ENCODE measurements at regions of chr1 and their contacts with region 1.

Region 1: DNA sequence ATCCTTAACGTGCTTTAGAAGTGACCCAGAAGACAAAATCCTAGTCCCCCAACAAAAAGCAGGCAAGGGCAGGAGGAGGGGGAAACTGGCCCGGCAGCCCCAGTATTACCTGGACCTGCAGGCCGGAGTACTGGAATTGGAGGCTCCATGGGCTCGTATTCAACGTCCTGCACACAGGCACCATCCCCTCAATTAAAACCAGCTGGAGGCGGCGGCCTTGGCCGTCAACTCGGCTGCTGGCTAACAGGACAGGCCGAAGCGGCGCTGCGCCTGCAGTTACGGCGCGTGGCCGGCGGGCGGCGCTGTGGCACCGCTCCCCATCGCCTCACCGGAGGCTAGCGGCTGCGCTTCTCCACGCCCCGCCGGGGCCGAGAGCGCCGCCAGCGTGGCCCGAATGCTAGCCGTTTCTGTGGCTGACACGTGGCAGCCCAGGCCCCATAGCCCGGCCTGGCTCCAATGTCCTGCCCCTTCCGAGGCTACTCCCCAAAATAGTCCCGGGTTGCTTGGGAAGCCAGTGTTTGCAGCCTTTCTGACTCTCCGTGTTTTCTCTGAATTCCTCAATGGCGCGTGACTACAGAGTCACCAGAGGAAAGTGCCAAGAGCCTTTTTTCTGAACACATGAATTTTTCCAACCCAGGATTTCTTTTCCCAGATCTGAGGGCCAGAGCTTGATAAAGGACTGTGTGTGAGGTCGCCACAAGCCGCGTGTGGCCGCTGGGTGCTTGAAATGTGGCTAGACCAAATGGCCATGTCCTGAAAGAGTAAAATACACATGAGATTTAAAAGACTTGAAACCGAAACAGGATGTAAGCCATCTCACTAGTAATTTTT is 82.5 kb downstream of the HHIPL2 start:
- DNase-seq: peak; percentile 89 to 91
- ATAC-seq: peak; percentile 98 to 100 (median 99)
- H3K4me3 ChIP-seq: peak overlapping the region in 9 of 10 donors; percentile 24 to 60 (median 49)
- H3K27ac ChIP-seq: peak overlapping the region; percentile 37 to 86 (median 76)
- H3K4me1 ChIP-seq: peaks cover 0 to 15% (median 7%) of the 10 kb centered on the region in 9 donors
- H3K27me3 ChIP-seq: no peaks in the 10 kb centered on the region
- CTCF ChIP-seq: peak; percentile 96 to 100 (median 100)

Region 2: DNA sequence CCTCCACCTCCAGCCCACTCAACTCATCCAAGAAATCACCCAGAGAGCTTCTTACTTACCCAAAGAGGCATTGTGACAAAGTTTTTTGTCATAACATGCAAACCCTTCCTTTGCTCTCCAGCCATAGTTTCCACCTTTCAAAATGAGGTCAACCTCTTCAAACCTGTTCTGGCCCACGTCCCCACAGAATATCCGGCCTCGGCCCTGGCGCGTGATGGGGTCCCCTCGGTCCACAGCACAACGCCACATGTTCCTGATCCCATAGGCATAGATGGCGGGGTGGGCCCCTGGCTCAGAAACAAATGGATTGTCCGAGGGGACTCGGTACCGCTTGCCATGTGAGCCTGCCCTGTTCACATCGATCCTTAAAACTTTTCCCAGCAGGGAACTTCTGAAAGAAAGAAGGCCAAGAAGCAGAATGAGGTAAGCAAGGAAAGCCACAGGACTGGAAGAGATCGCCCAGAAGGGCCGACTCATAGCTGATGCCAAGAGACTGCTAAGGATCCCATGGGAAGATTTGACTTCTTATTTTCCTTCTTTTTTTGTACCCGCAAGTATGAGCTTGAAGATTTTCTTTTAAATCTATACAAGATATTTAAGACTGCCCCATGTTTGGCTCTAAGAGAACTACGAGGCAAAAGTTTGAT is 74.6 kb after region 1 on chr1:
- intact Hi-C with region 1: no loop called
- DNase-seq: no peak
- ATAC-seq: no peak
- H3K4me3 ChIP-seq: no peak overlapping the region
- H3K27ac ChIP-seq: no peak overlapping the region
- H3K4me1 ChIP-seq: no peaks in the 10 kb centered on the region
- H3K27me3 ChIP-seq: peaks cover 0 to 24% (median 18%) of the 10 kb centered on the region in 7 donors
- CTCF ChIP-seq: no peak

Region 3: DNA sequence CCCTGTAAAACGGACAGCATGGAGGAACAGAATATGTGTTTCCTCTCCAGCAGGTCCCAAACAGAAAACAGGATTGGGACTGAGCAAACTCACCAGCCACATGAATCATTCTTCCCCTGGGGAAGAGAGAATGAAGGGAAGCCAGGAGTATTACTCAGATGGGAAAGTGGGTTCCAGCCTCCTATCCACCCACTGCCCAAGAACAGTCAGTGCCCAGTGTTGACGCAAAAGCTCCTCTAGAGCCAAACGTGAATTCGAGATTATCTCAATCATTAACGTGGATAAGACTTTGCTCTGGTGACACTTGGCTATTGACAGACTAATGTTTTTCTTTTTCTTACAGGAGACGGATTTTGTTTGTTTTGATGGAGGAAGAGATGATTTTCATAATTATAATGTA is 161.8 kb after region 1 on chr1:
- intact Hi-C with region 1: loop called in 2 of 10 experiments (anchors 5 kb)
- DNase-seq: peak in 1 of 2 donors; percentile 7
- ATAC-seq: peak in 5 of 8 donors; percentile 35 to 92 (median 47)
- H3K4me3 ChIP-seq: no peak overlapping the region
- H3K27ac ChIP-seq: no peak overlapping the region
- H3K4me1 ChIP-seq: peaks cover 0 to 7% (median 0%) of the 10 kb centered on the region in 9 donors
- H3K27me3 ChIP-seq: no peaks in the 10 kb centered on the region
- CTCF ChIP-seq: no peak

Region 4: GRCh38 chr1:222634180-222635013 is 169.0 kb after region 1 on chr1:
- intact Hi-C with region 1: loop called (anchors 1 to 5 kb)
- DNase-seq: peak in 1 of 2 donors; percentile 85
- ATAC-seq: peak in 7 of 8 donors; percentile 55 to 84 (median 77)
- H3K4me3 ChIP-seq: no peak overlapping the region
- H3K27ac ChIP-seq: peak overlapping the region in 1 of 10 donors; percentile 16
- H3K4me1 ChIP-seq: no peaks in the 10 kb centered on the region
- H3K27me3 ChIP-seq: no peaks in the 10 kb centered on the region
- CTCF ChIP-seq: peak; percentile 85 to 95 (median 90)

Region 5: GRCh38 chr1:222713091-222713961 is 247.9 kb after region 1 on chr1:
- intact Hi-C with region 1: loop called in 1 of 10 experiments (anchors 10 kb)
- DNase-seq: peak; percentile 92 to 94
- ATAC-seq: peak; percentile 85 to 92 (median 90)
- H3K4me3 ChIP-seq: peak overlapping the region; percentile 57 to 97 (median 90)
- H3K27ac ChIP-seq: peak overlapping the region; percentile 92 to 99 (median 94)
- H3K4me1 ChIP-seq: peaks cover 0 to 40% (median 28%) of the 10 kb centered on the region in 9 donors
- H3K27me3 ChIP-seq: no peaks in the 10 kb centered on the region
- CTCF ChIP-seq: no peak

Measured in heart right ventricle (tissue), 16 donors.